GM12878 (cell line): ENCODE measurements at regions of chr19 and their contacts with region 1.

Region 1: DNA sequence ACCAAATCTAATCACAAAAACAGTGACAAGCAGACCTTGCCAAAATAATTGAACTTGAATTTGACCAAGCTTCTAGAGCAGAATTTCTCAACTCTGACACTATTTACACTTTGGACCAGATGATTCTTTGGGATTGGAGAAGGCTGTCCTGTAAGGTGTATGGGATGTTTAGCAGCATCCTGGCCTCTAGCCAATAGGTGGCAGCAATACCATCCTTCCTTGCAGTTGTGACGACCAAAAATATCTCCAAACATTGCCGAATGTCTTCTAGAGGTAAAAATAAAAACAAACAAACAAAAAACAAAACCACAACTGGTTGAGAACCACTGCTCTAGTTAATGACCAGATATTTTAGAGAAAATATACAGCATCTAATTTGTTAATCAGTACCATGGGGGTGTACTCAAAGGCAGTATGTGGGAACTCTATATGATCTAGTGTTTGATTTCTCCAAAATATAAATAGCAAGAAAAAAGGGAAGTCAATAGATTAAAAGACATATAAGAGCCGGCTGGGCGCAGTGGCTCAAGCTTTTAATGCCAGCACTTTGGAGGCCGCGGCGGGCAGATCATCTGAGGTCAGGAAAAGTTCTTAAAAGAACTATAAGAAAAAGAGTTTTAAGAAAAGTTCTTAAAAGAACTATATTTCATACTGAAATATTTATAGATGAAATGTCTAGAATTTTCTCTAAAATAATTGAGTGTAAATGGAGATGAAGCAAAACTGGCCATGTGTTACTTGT is 60.9 kb upstream of the ZNF527 start:
- DNase-seq: no peak
- ATAC-seq: no peak
- H3K4me3 ChIP-seq: no peak overlapping the region
- H3K27ac ChIP-seq: no peak overlapping the region
- H3K4me1 ChIP-seq: no peaks in the 10 kb centered on the region
- H3K27me3 ChIP-seq: no peaks in the 10 kb centered on the region
- CTCF ChIP-seq: peak; percentile 22 to 36 (median 31); a peak in 3 of 6 replicates
- EP300 ChIP-seq: no peak
- POLR2A ChIP-seq: no peak
- RAD21 ChIP-seq: peak; percentile 49

Region 2: DNA sequence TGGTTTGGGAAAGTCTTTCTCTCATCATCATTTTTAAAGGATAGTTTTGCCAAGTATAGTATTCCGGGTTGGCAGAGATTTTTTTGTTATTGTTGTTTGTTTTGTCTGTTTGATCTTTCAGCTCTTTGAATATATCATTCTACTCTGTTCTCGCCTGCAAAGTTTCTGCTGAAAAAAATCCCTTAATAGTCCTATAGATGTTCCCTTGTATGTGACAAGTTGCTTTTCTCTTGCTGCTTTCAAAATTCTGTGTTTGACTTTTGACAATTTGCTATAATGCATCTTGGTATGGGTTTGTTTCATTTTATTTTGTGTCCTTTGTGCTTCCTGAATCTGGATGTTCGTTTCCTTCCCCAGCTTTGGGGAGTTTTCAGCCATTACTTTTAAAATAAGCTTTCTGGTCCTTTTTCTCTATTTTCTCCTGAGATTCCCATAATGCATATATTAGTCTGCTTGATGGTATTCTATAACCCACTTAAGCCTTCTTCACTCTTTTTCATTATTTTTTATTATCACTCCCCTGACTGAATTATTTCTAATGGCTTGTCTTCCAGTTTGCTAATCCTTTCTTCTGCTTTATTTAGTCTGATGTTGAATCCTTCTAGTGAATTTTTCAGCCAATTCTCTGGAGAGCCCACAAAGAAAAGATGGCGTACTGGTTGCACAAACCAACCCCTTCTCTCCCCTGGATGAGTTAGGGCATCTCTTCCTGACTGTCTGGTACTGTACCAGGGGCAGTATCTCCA is 142.7 kb after region 1 on chr19:
- CTCF ChIA-PET with region 1: no interaction called
- POLR2A ChIA-PET with region 1: no interaction called
- RAD21 ChIA-PET with region 1: no interaction called
- SMC1A ChIA-PET with region 1: no interaction called
- in situ Hi-C with region 1: no loop called
- intact Hi-C with region 1: no loop called
- DNase-seq: no peak
- ATAC-seq: no peak
- H3K4me3 ChIP-seq: no peak overlapping the region
- H3K27ac ChIP-seq: no peak overlapping the region
- H3K4me1 ChIP-seq: no peaks in the 10 kb centered on the region
- H3K27me3 ChIP-seq: no peaks in the 10 kb centered on the region
- CTCF ChIP-seq: no peak
- EP300 ChIP-seq: no peak
- POLR2A ChIP-seq: no peak
- RAD21 ChIP-seq: no peak

Region 3: GRCh38 chr19:37466798-37467607 is 157.0 kb after region 1 on chr19 and contains the start of gene ZNF569:
- CTCF ChIA-PET with region 1: no interaction called
- POLR2A ChIA-PET with region 1: no interaction called
- RAD21 ChIA-PET with region 1: no interaction called
- SMC1A ChIA-PET with region 1: no interaction called
- in situ Hi-C with region 1: no loop called
- intact Hi-C with region 1: no loop called
- DNase-seq: peak; percentile 77
- ATAC-seq: peak; percentile 83
- H3K4me3 ChIP-seq: peak within 1 kb of the TSS; percentile 93
- H3K27ac ChIP-seq: peak within 1 kb of the TSS; percentile 81
- H3K4me1 ChIP-seq: peaks cover 4% of the 10 kb centered on the region
- H3K27me3 ChIP-seq: no peaks in the 10 kb centered on the region
- CTCF ChIP-seq: no peak
- EP300 ChIP-seq: 0 out of 4 replicates have a peak, but pooled peaks of 1 of the 2 experiments have one; percentile 16
- POLR2A ChIP-seq: peak; percentile 85
- RAD21 ChIP-seq: peak; percentile 5; the same call in 1 of the 2 replicates
- polyA plus RNA-seq, gene ZNF569: 0.82 to 1.1 TPM

Region 4: DNA sequence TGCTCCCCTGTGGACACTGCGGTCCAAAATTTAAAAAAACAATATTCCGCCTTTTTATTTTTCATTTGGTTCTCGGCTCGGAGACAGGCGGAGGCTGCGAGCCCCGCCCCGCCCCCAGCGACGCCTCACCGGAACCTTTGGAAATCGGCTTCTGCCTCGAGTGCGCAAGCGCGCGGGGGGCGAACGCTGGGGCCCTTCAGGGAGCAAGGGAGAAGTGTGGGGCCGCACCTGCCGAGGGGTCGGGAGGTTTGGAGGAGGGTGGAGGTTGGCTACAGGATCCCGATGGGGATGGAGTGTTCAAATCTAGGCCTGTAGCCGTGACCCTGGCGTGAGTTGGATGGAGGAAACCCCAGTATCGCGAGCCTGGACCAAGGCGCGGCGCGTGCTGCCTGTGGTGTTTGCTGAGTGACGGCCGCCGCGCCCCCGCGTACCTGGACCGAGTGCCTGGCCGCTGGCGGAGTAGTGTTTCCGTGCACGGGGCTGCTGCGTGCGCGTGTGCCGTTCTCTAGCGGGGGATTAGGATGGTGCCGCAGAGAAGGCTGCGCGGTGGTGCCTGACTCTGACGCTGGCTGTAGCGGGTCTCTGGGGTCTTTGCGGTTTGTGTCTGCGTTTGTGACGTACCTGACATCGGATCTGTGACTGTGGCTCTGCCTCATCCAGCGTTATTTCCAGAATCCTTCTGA is 345.8 kb after region 1 on chr19:
- CTCF ChIA-PET with region 1: no interaction called
- POLR2A ChIA-PET with region 1: interaction called, 4 read pairs
- RAD21 ChIA-PET with region 1: no interaction called
- SMC1A ChIA-PET with region 1: no interaction called
- in situ Hi-C with region 1: loop called (anchors 10 kb)
- intact Hi-C with region 1: no loop called
- DNase-seq: peak; percentile 45
- ATAC-seq: peak; percentile 79
- H3K4me3 ChIP-seq: peak overlapping the region; percentile 80
- H3K27ac ChIP-seq: peak overlapping the region; percentile 85
- H3K4me1 ChIP-seq: no peaks in the 10 kb centered on the region
- H3K27me3 ChIP-seq: no peaks in the 10 kb centered on the region
- CTCF ChIP-seq: no peak
- EP300 ChIP-seq: 0 out of 4 replicates have a peak, but pooled peaks of 1 of the 2 experiments have one; percentile 25
- POLR2A ChIP-seq: peak; percentile 79
- RAD21 ChIP-seq: no peak